ENCODE measurements at regions of chr11 and their contacts with region 1.

Region 1: GRCh38 chr11:121655537-121656327 is 203.0 kb upstream of the SORL1-AS1 start:
- DNase-seq: peak; percentile 35 to 64 (median 41)
- H3K4me3 ChIP-seq: peak overlapping the region; percentile 68
- H3K4me3 Mint-ChIP-seq: peak overlapping the region; percentile 63 to 89 (median 82)
- H3K27ac ChIP-seq: no peak overlapping the region
- H3K27ac Mint-ChIP-seq: peak overlapping the region in 6 of 8 donors; percentile 2 to 63 (median 38)
- H3K4me1 ChIP-seq: peaks cover 16% of the 10 kb centered on the region
- H3K4me1 Mint-ChIP-seq: peaks cover 27 to 34% (median 27%) of the 10 kb centered on the region in 3 donors
- H3K27me3 ChIP-seq: no peaks in the 10 kb centered on the region
- H3K27me3 Mint-ChIP-seq: peaks cover 0 to 6% of the 10 kb centered on the region in 2 donors

Region 2: DNA sequence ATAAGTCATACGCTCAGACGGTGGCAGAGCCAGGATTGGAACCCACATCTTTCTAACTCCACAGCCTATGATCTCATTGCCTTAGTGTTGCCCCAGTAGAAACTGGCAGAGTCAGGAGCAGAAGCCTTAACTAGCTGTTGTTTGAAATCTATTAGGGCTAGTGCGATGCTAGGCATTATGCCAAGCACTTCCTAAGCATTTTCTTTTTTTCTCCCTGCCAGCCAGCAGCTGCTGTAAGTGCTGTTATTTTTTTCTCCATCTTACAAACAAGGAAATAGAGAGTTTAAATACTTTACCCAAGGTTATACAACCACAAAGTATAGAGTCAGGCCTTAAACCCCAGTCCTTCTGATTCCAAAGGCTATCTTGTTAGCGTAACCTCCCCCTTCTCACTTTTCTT is 42.0 kb before region 1 on chr11:
- CTCF ChIA-PET with region 1: no interaction called
- POLR2A ChIA-PET with region 1: no interaction called
- DNase-seq: no peak
- H3K4me3 ChIP-seq: no peak overlapping the region
- H3K4me3 Mint-ChIP-seq: no peak overlapping the region
- H3K27ac ChIP-seq: no peak overlapping the region
- H3K27ac Mint-ChIP-seq: peak overlapping the region in 2 of 8 donors; percentile 6 to 58
- H3K4me1 ChIP-seq: no peaks in the 10 kb centered on the region
- H3K4me1 Mint-ChIP-seq: no peaks in the 10 kb centered on the region
- H3K27me3 ChIP-seq: no peaks in the 10 kb centered on the region
- H3K27me3 Mint-ChIP-seq: peaks cover 0 to 3% of the 10 kb centered on the region in 2 donors

Region 3: DNA sequence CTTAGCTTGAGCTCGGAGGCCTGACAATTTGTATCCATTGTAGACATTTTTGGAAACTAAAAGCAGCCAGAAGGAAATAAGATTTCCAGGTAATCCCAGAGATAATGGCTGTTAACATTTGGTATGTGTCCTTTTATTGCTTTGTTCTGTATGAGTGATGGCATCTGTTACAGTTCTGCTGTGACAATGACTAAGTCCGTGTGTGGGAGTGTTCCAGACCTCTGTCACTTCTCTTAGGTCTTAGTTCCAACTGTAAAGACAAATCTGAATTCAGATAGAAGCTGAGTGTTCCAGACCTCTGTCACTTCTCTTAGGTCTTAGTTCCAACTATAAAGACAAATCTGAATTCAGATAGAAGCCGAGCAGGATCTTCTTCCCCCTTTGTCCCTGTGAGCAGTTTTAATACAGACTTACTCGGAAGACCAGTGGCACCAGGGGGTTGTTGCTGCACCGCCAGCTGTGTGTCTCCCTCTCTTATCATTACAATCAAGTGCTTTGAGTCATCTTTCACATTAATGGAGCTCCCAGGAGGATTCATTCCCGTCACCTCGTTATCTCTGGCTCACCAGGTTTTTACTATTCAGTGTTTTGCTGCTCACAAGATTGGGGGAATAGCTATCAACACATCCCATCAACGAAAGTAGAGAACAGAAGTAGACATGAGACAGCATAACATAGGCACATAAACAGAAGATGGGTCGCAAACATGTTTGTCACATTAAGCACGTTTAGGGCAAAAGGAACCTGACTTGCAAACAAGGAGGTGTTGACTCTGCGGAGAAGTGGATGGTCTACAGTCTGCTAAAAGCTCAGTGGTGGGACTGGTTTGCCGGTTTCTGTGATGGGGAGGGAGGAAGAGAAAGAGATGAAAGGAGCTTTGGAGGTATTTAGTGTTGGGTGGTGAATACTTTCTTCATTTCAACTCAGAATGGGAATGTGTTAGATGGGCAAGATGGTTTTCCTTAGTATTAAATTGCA is 11.9 kb before region 1 on chr11:
- CTCF ChIA-PET with region 1: interaction called, 12 read pairs
- POLR2A ChIA-PET with region 1: no interaction called
- DNase-seq: no peak
- H3K4me3 ChIP-seq: no peak overlapping the region
- H3K4me3 Mint-ChIP-seq: no peak overlapping the region
- H3K27ac ChIP-seq: no peak overlapping the region
- H3K27ac Mint-ChIP-seq: peak overlapping the region in 1 of 8 donors; percentile 60
- H3K4me1 ChIP-seq: no peaks in the 10 kb centered on the region
- H3K4me1 Mint-ChIP-seq: peaks cover 0 to 5% (median 5%) of the 10 kb centered on the region in 3 donors
- H3K27me3 ChIP-seq: no peaks in the 10 kb centered on the region
- H3K27me3 Mint-ChIP-seq: no peaks in the 10 kb centered on the region

Region 4: GRCh38 chr11:121767433-121767832 is 111.7 kb after region 1 on chr11:
- CTCF ChIA-PET with region 1: no interaction called
- POLR2A ChIA-PET with region 1: no interaction called
- DNase-seq: no peak
- H3K4me3 ChIP-seq: no peak overlapping the region
- H3K4me3 Mint-ChIP-seq: no peak overlapping the region
- H3K27ac ChIP-seq: no peak overlapping the region
- H3K27ac Mint-ChIP-seq: no peak overlapping the region
- H3K4me1 ChIP-seq: no peaks in the 10 kb centered on the region
- H3K4me1 Mint-ChIP-seq: no peaks in the 10 kb centered on the region
- H3K27me3 ChIP-seq: no peaks in the 10 kb centered on the region
- H3K27me3 Mint-ChIP-seq: peaks cover 3 to 6% of the 10 kb centered on the region in 2 donors

Measured in CD8-positive, alpha-beta memory T cell (primary cell).